Posterior cingulate gyrus (tissue), 11 donors: ENCODE measurements at regions of chr3 and their contacts with region 1.

Region 1: GRCh38 chr3:179929091-179929529 is 107.6 kb downstream of the PEX5L start:
- DNase-seq: peak in 8 of 10 donors; percentile 34 to 93 (median 72)

Region 2: DNA sequence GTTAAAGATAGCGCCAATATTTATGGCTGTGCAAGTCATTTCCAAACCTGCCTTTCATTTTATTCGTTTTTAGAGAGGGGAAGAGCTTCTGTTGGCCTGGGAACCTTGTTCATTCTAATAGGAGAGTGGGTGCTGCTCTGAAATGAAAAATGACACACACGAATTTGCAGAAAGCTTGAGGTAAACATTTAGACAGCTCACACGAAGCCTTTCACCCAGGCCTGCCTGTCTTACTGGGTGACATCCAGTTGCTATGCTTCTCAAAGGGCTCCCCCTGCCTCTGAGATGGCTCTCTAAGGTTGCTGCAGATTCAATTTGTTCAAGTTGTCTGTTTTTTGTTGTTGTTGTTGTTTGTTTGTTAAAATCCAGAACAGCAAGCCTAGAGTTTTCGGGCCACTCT is 89.4 kb after region 1 on chr3:
- intact Hi-C with region 1: loop called (anchors 2 kb)
- DNase-seq: peak in 6 of 10 donors; percentile 27 to 85 (median 53)

Region 3: GRCh38 chr3:180036671-180037455 is 107.8 kb after region 1 on chr3 and contains the start of gene PEX5L:
- intact Hi-C with region 1: loop called (anchors 5 kb)
- DNase-seq: peak; percentile 53 to 97 (median 74)

Region 4: GRCh38 chr3:180594631-180595558 is 665.8 kb after region 1 on chr3:
- intact Hi-C with region 1: loop called (anchors 10 kb)
- DNase-seq: no peak